ENCODE measurements at regions of chr6 and their contacts with region 1.

Region 1: DNA sequence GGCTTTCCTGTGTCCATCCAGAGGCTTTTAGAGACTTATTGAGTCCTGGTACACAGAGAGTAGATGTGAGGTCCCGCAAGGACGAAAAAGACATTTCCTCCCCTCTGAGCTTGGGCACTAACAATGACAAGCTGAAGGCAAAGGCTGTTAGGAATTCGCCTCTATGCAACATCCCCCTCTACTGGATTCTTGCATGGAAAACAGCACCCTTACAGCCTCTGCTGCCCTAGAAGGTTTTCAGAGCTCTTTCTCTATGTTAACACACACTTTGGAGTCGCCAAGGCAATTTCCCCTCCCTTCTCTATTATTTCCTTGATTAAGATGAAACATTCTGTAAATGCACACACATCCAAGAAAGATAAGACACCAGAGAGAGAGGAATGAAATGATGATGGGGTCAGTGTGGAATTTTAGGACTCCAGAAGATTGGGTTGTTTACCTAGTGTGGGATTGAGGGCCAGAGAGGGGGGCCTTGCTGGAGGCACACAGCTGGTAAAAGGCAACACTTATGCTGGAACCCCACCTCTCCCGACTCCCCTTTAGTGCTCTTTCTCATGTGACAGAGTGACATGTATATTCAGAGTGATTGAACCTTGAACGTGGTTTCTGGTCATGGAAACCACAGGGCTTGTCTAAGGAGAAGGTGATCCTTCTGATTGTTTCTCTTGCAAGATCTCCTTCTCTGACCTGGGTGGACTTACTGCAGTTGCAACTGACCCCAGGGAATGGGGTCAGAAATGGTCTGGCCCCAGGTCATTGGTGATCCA is 300.7 kb downstream of the CLIC5 start:
- DNase-seq: peak; percentile 62
- ATAC-seq: peak; percentile 37
- H3K4me3 Mint-ChIP-seq: no peak overlapping the region
- H3K27ac Mint-ChIP-seq: peak overlapping the region; percentile 90
- H3K4me1 Mint-ChIP-seq: peaks cover 61% of the 10 kb centered on the region
- H3K27me3 Mint-ChIP-seq: no peaks in the 10 kb centered on the region
- CTCF ChIP-seq: peak; percentile 63

Region 2: GRCh38 chr6:44655412-44656342 is 1059.2 kb before region 1 on chr6:
- CTCF ChIA-PET with region 1: interaction called, 26 read pairs
- POLR2A ChIA-PET with region 1: no interaction called
- intact Hi-C with region 1: loop called (anchors 10 kb)
- DNase-seq: peak; percentile 84
- ATAC-seq: peak; percentile 94
- H3K4me3 Mint-ChIP-seq: no peak overlapping the region
- H3K27ac Mint-ChIP-seq: peak overlapping the region; percentile 67
- H3K4me1 Mint-ChIP-seq: peaks cover 7% of the 10 kb centered on the region
- H3K27me3 Mint-ChIP-seq: peaks cover 3% of the 10 kb centered on the region
- CTCF ChIP-seq: peak; percentile 95

Region 3: DNA sequence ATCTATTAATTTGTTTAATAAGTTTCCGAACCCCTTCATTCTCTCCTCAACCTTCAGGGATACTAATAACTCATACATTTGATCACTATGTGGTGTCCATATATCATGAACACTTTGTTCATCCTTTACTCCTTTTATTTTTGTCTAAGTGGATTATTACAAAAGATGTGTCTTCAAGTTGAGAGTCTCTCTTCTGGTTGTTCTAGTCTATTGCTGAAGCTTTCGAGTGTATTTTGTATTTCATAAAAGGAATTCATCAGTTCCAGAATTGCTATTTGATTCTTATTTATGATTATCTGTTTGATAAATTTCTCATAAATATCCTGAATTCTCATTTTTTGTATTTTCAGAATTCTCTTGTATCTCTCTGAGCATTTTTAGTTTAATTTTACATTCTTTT is 483.3 kb before region 1 on chr6:
- CTCF ChIA-PET with region 1: no interaction called
- POLR2A ChIA-PET with region 1: no interaction called
- intact Hi-C with region 1: no loop called
- DNase-seq: no peak
- ATAC-seq: no peak
- H3K4me3 Mint-ChIP-seq: no peak overlapping the region
- H3K27ac Mint-ChIP-seq: no peak overlapping the region
- H3K4me1 Mint-ChIP-seq: no peaks in the 10 kb centered on the region
- H3K27me3 Mint-ChIP-seq: no peaks in the 10 kb centered on the region
- CTCF ChIP-seq: no peak

Region 4: DNA sequence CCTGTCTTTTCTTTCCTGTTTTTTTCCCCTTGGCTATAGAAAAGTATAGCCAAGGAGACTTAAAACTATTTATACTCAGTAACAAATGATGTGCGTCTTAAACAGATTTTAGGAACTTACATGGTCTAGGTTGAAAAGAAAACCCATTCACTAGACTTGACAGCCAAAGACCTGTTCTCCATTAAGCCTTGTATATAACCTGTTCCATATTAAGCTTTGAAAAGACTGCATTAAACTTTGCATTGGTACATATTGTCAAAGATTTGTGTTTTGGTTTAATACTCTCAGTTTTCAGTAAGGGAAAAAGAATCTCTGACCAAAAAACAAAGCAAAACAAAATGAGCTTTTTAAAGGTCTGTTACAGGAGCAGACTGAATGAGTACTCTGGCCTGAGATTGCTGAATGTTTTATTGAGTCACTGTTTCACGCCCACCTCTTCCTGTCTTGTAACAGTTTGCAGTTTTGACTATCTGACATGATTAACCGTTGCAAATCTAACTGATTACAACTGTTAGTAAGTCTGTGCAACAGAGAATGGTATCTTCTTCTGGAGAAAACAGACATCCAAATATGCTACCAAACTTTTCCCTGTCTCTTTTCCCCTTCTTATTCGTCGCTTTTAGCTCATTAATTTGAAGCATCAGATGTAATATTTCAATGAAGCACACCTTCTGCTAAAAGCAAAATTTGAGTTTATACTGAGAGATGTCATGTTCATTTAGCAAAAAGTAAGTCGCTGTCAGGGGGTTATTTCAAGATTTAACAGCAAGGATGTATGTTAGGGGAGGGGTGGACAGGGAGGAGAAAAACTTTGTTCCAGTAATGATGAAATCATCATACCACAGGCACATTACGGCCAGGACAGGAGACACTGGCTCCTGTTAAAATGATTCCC is 278.1 kb before region 1 on chr6:
- CTCF ChIA-PET with region 1: interaction called, 5 read pairs
- POLR2A ChIA-PET with region 1: interaction called, 4 read pairs
- intact Hi-C with region 1: loop called (anchors 5 kb)
- DNase-seq: peak; percentile 77
- ATAC-seq: peak; percentile 95
- H3K4me3 Mint-ChIP-seq: peak overlapping the region; percentile 27
- H3K27ac Mint-ChIP-seq: peak overlapping the region; percentile 84
- H3K4me1 Mint-ChIP-seq: peaks cover 67% of the 10 kb centered on the region
- H3K27me3 Mint-ChIP-seq: no peaks in the 10 kb centered on the region
- CTCF ChIP-seq: no peak

Region 5: GRCh38 chr6:45626087-45626891 is 88.6 kb before region 1 on chr6:
- CTCF ChIA-PET with region 1: interaction called, 3 read pairs
- POLR2A ChIA-PET with region 1: no interaction called
- intact Hi-C with region 1: loop called (anchors 5 kb)
- DNase-seq: peak; percentile 38
- ATAC-seq: peak; percentile 57
- H3K4me3 Mint-ChIP-seq: no peak overlapping the region
- H3K27ac Mint-ChIP-seq: peak overlapping the region; percentile 71
- H3K4me1 Mint-ChIP-seq: peaks cover 49% of the 10 kb centered on the region
- H3K27me3 Mint-ChIP-seq: no peaks in the 10 kb centered on the region
- CTCF ChIP-seq: no peak

Region 6: DNA sequence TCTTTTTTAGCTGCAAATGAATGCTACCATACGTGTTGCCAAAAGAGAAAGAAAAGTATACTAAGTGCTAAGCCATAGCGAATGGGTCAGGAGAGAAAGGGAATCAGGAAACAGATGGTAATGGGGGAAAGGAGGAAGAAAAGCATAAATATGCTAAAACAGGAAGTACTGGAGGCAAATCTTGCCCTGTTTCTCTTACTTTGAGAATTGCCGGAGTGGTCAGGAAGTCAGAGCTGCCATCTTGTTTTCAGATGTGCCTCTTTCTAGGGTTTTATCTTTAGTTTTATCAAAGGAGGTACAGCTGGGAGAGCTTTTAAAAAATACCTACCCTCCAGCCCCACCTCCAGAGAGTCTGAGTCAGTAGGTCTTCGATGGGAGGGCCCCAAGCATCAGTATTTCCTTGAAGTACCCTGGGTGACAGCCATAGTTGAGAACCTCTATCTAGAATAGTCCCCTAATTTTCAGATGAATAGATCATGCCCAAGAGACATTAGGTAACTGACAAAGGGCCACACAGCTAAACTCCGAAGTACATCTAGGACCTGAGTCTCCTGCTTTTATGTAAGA is 107.4 kb after region 1 on chr6:
- CTCF ChIA-PET with region 1: no interaction called
- POLR2A ChIA-PET with region 1: interaction called, 3 read pairs
- intact Hi-C with region 1: loop called (anchors 2 kb)
- DNase-seq: peak; percentile 66
- ATAC-seq: peak; percentile 93
- H3K4me3 Mint-ChIP-seq: peak overlapping the region; percentile 1
- H3K27ac Mint-ChIP-seq: peak overlapping the region; percentile 73
- H3K4me1 Mint-ChIP-seq: peaks cover 24% of the 10 kb centered on the region
- H3K27me3 Mint-ChIP-seq: peaks cover 7% of the 10 kb centered on the region
- CTCF ChIP-seq: no peak